Posterior cingulate gyrus (tissue), 11 donors: ENCODE measurements at regions of chr21 and their contacts with region 1.

Region 1: DNA sequence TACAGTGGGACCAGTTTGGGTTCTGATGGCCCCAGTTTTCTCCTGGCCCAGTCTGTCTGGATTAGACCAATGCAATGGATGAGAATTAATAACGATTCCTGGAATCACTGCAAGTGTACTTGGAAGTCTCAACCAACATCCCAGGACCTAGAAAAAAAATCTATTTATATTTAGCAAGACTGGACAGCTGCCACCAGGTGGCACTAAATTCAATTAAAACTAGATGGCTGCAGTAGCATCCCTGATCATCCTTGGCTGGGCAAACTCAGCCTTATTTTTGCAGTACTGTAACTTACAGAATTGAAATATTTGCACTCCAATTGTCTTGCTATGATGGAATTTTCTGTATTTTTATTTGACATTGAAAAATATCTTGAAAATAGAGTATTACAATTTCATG is 165.7 kb downstream of the NCAM2 start:
- DNase-seq: peak in 2 of 10 donors; percentile 6 to 46

Region 2: GRCh38 chr21:20774737-20775136 is 389.2 kb before region 1 on chr21:
- intact Hi-C with region 1: no loop called
- DNase-seq: no peak

Region 3: GRCh38 chr21:21373969-21374368 is 210.1 kb after region 1 on chr21:
- intact Hi-C with region 1: loop called (anchors 10 kb)
- DNase-seq: no peak